PC-9 (cell line): ENCODE measurements at regions of chrX and their contacts with region 1.

Region 1: GRCh38 chrX:57821703-57822375 is 88.4 kb downstream of the ZXDA start:
- DNase-seq: peak in 1 of 2 experiments; percentile 6
- H3K4me3 ChIP-seq: peak overlapping the region; percentile 13; the same call in 1 of the 2 replicates
- H3K27ac ChIP-seq: no peak overlapping the region
- H3K4me1 ChIP-seq: no peaks in the 10 kb centered on the region
- H3K27me3 ChIP-seq: no peaks in the 10 kb centered on the region
- CTCF ChIP-seq: peak; percentile 75

Region 2: GRCh38 chrX:57929373-57929772 is 107.5 kb after region 1 on chrX:
- CTCF ChIA-PET with region 1: no interaction called
- POLR2A ChIA-PET with region 1: no interaction called
- intact Hi-C with region 1: loop called (anchors 5 kb)
- DNase-seq: no peak
- H3K4me3 ChIP-seq: no peak overlapping the region
- H3K27ac ChIP-seq: no peak overlapping the region
- H3K4me1 ChIP-seq: no peaks in the 10 kb centered on the region
- H3K27me3 ChIP-seq: no peaks in the 10 kb centered on the region
- CTCF ChIP-seq: peak; percentile 52

Region 3: GRCh38 chrX:57951666-57952319 is 130.0 kb after region 1 on chrX:
- CTCF ChIA-PET with region 1: no interaction called
- POLR2A ChIA-PET with region 1: no interaction called
- intact Hi-C with region 1: no loop called
- DNase-seq: no peak
- H3K4me3 ChIP-seq: no peak overlapping the region
- H3K27ac ChIP-seq: no peak overlapping the region
- H3K4me1 ChIP-seq: no peaks in the 10 kb centered on the region
- H3K27me3 ChIP-seq: no peaks in the 10 kb centered on the region; the same call in 1 of the 2 replicates
- CTCF ChIP-seq: no peak

Region 4: GRCh38 chrX:58025979-58026378 is 204.1 kb after region 1 on chrX:
- CTCF ChIA-PET with region 1: no interaction called
- POLR2A ChIA-PET with region 1: no interaction called
- intact Hi-C with region 1: loop called (anchors 5 kb)
- DNase-seq: peak in 1 of 2 experiments; percentile 8
- H3K4me3 ChIP-seq: no peak overlapping the region
- H3K27ac ChIP-seq: no peak overlapping the region
- H3K4me1 ChIP-seq: no peaks in the 10 kb centered on the region
- H3K27me3 ChIP-seq: no peaks in the 10 kb centered on the region
- CTCF ChIP-seq: peak; percentile 66